ENCODE measurements at regions of chr11 and their contacts with region 1.

Region 1: DNA sequence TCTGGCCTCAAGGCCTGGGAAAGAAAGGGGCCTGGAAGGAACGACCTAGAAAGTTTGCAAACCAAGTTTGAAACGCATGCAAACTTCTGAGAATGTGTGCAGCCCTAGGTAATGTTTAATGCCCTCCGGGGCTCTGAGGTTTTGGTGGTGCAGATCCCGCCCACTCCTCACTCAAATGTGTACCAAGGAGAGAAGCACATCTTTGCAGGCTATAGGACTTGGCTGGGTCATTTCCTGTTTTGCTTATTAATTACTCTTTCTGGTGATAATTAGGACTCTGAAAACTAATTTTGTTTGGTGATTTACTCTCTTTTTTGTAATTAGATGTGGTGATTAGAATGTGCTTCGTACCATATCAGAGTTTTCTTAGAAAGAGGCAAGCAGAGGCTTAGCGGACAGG is 625.9 kb upstream of the CADM1 start:
- DNase-seq: no peak
- ATAC-seq: no peak
- H3K4me3 ChIP-seq: no peak overlapping the region
- H3K27ac ChIP-seq: no peak overlapping the region
- H3K4me1 ChIP-seq: peaks cover 0 to 19% (median 0%) of the 10 kb centered on the region in 12 donors
- H3K27me3 ChIP-seq: peaks cover 0 to 4% (median 0%) of the 10 kb centered on the region in 9 donors
- CTCF ChIP-seq: no peak
- POLR2A ChIP-seq: no peak

Region 2: GRCh38 chr11:116193321-116194131 is 63.4 kb after region 1 on chr11:
- intact Hi-C with region 1: loop called in 1 of 10 experiments (anchors 10 kb)
- DNase-seq: peak in 4 of 5 donors; percentile 35 to 43 (median 40)
- ATAC-seq: peak; percentile 38 to 83 (median 64)
- H3K4me3 ChIP-seq: peak overlapping the region in 11 of 12 donors; percentile 17 to 66 (median 53)
- H3K27ac ChIP-seq: peak overlapping the region in 7 of 12 donors; percentile 12 to 75 (median 59)
- H3K4me1 ChIP-seq: peaks cover 0 to 17% (median 5%) of the 10 kb centered on the region in 12 donors
- H3K27me3 ChIP-seq: peaks cover 0 to 16% (median 0%) of the 10 kb centered on the region in 9 donors
- CTCF ChIP-seq: peak in 5 of 12 donors; percentile 12 to 28 (median 24)
- POLR2A ChIP-seq: no peak